GM12878 (cell line): ENCODE measurements at regions of chr14 and their contacts with region 1.

Region 1: DNA sequence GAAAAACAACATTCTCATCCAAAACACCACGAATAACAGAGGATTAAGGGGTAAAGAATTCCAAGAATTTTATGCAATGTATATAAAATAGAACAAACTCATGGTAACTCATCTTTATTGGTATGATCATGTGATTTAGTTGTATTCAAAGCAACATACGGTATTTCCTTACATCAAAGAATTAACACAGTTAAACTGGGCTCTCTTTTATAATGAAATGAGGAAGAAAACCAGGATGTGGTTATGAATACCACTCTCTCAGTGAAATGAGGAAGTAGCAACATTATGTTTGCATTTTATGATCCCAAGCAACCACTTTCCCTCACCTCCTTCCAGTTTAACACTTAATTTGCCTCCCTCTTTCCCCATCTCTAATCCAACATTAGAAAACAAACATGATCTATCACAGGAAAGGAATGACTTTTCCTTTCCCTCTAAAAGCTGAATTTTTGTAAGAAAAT is 22.9 kb downstream of the SPTLC2 start:
- DNase-seq: peak; percentile 52
- ATAC-seq: peak; percentile 84
- H3K4me3 ChIP-seq: no peak overlapping the region
- H3K27ac ChIP-seq: peak overlapping the region; percentile 81
- H3K4me1 ChIP-seq: peaks cover 32% of the 10 kb centered on the region
- H3K27me3 ChIP-seq: no peaks in the 10 kb centered on the region
- CTCF ChIP-seq: no peak
- EP300 ChIP-seq: peak; percentile 57 to 72; a peak in 3 of 4 replicates
- POLR2A ChIP-seq: no peak
- RAD21 ChIP-seq: no peak

Region 2: DNA sequence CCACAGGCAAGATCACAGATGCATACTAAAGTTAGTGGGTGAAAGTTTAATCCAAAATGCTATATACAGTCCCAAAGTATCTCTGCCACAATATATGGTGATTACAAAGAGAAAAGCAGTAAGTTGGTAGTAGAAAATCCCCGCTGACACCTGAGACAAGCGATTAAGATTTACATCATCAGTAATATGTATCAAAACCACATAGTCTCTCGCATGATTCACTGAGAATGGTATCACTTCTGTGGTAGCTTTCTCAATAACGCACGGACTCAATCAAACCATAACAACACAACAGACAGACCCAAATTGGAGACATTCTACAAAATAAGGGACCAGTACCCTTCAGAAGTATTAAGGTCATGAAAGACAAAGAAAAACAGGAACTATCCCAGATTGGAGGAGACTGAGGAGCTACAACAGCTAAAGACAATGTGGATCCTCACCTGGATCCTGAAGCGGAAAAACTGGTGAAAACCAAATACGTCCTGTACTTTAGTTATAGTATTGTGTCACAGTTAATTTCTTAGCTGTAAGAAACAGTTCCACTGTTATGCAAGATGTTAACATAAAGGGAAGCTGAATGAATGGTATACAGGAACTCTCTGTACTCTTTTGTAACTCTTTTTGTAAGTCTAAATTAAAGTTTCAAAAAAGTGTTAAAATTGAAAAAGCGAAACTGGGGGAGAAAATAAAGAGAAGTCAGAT is 28.1 kb before region 1 on chr14:
- CTCF ChIA-PET with region 1: no interaction called
- POLR2A ChIA-PET with region 1: no interaction called
- RAD21 ChIA-PET with region 1: no interaction called
- SMC1A ChIA-PET with region 1: no interaction called
- in situ Hi-C with region 1: no loop called
- intact Hi-C with region 1: no loop called
- DNase-seq: no peak
- ATAC-seq: no peak
- H3K4me3 ChIP-seq: no peak overlapping the region
- H3K27ac ChIP-seq: no peak overlapping the region
- H3K4me1 ChIP-seq: no peaks in the 10 kb centered on the region
- H3K27me3 ChIP-seq: no peaks in the 10 kb centered on the region
- CTCF ChIP-seq: no peak
- EP300 ChIP-seq: no peak
- POLR2A ChIP-seq: no peak
- RAD21 ChIP-seq: no peak

Region 3: DNA sequence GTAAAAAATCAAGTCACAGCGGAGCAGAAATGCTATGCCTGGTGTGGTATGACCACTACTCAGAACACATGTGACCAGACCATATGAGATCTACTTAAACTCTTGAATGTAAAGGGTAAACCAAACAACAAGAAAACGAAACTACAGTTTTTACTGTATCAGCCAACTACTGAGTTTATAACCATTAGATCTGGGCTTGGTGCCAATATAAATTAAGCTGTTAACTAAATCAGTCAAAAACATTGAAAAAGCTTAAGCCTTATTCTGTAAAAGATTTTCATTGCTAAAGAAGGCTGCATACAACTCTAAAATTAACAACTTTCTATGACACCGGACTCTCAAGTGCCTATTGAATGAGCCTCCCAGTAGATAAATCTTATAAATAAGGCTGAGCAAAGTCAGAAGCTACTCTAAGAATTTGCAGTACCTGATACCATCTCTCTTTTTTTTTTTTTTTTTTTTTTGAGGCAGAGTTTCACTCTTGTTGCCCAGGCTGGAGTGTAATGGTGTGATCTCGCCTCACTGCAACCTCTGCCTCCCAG is 12.5 kb before region 1 on chr14:
- CTCF ChIA-PET with region 1: interaction called, 7 read pairs
- POLR2A ChIA-PET with region 1: interaction called, 6 read pairs
- RAD21 ChIA-PET with region 1: interaction called, 3 read pairs
- SMC1A ChIA-PET with region 1: interaction called, 16 read pairs
- in situ Hi-C with region 1: no loop called
- intact Hi-C with region 1: no loop called
- DNase-seq: peak; percentile 66
- ATAC-seq: peak; percentile 99
- H3K4me3 ChIP-seq: no peak overlapping the region
- H3K27ac ChIP-seq: peak overlapping the region; percentile 45; the same call in 1 of the 2 replicates
- H3K4me1 ChIP-seq: peaks cover 4% of the 10 kb centered on the region
- H3K27me3 ChIP-seq: no peaks in the 10 kb centered on the region
- CTCF ChIP-seq: no peak
- EP300 ChIP-seq: peak; percentile 41 to 45; a peak in 2 of 4 replicates
- POLR2A ChIP-seq: no peak
- RAD21 ChIP-seq: no peak

Region 4: DNA sequence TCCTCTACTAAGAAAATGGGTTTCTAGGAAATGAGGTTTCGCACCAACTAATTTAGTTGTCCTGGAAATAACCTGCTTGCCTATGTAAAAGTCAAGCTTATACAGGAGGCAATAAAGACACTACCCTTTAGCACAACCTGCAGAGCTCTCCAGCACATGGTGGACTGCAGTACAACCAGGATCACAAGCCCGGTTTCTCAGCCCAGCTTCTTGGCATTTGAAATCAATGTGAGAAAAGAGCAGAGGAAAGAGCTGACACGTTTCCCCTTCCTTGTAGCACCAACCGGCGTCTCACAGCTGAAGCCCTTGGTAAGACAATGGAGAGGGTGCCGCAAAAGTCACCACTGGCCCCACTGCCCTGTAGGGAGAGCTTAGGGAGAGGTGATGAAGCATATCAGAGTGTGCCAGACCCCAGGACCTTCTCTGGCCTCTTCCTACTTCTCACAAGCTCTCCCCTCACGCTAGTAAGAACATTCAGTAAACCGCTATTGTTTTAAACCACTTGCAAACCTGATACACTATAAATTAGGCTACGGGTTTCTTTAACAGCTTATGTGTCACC is 14.3 kb after region 1 on chr14:
- CTCF ChIA-PET with region 1: interaction called, 4 read pairs
- POLR2A ChIA-PET with region 1: interaction called, 7 read pairs
- RAD21 ChIA-PET with region 1: interaction called, 14 read pairs
- SMC1A ChIA-PET with region 1: interaction called, 17 read pairs
- in situ Hi-C with region 1: no loop called
- intact Hi-C with region 1: no loop called
- DNase-seq: no peak
- ATAC-seq: peak; percentile 77
- H3K4me3 ChIP-seq: 0 out of 2 replicates have a peak overlapping the region, but pooled peaks have one; percentile 31
- H3K27ac ChIP-seq: peak overlapping the region; percentile 68
- H3K4me1 ChIP-seq: peaks cover 18% of the 10 kb centered on the region
- H3K27me3 ChIP-seq: no peaks in the 10 kb centered on the region
- CTCF ChIP-seq: no peak
- EP300 ChIP-seq: no peak
- POLR2A ChIP-seq: no peak
- RAD21 ChIP-seq: no peak

Region 5: DNA sequence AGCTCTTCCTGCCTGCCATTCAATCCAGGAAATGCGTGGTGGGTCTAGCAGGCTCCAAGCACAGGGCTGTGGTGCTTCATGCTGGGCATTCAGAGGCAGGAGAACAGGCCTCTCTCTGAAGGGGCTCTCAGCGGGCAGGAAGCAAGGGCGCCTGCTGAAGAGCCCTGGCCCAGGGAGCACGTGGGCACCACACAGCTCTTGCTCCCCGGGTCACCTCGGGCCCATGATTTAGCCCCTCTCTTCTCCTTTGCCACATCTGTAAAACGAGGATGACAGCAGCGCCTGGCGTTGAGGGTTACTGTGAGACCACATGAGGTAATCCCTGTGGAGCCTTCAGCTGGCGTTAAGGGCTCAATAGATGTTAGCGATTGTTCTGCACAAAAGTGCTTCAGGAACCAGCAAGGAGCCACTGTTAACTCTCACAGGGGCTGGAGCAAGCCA is 60.5 kb after region 1 on chr14:
- CTCF ChIA-PET with region 1: no interaction called
- POLR2A ChIA-PET with region 1: no interaction called
- RAD21 ChIA-PET with region 1: no interaction called
- SMC1A ChIA-PET with region 1: no interaction called
- in situ Hi-C with region 1: no loop called
- intact Hi-C with region 1: no loop called
- DNase-seq: no peak
- ATAC-seq: peak; percentile 18; the same call in 2 of the 3 replicates
- H3K4me3 ChIP-seq: no peak overlapping the region
- H3K27ac ChIP-seq: no peak overlapping the region
- H3K4me1 ChIP-seq: no peaks in the 10 kb centered on the region; the same call in 1 of the 2 replicates
- H3K27me3 ChIP-seq: no peaks in the 10 kb centered on the region
- CTCF ChIP-seq: no peak
- EP300 ChIP-seq: no peak
- POLR2A ChIP-seq: no peak
- RAD21 ChIP-seq: no peak